Activated T-helper 2 cell treated with anti-CD3 and anti-CD28 coated beads, Interferon-gamma antibody, Interleukin-2, Interleukin-4, amounts not matched to agents 10 μg/mL and 5 μg/mL and 100 μg/mL, durations not matched to agents 14 hours and 24 hours and 36 hours (primary cell): ENCODE measurements at regions of chr6 and their contacts with region 1.

Region 1: GRCh38 chr6:25601800-25602673 is 50.0 kb upstream of the SCGN start:
- DNase-seq: no peak
- H3K4me3 Mint-ChIP-seq: no peak overlapping the region
- H3K27ac Mint-ChIP-seq: no peak overlapping the region
- H3K4me1 Mint-ChIP-seq: peaks cover 4% of the 10 kb centered on the region
- H3K27me3 Mint-ChIP-seq: no peaks in the 10 kb centered on the region

Region 2: DNA sequence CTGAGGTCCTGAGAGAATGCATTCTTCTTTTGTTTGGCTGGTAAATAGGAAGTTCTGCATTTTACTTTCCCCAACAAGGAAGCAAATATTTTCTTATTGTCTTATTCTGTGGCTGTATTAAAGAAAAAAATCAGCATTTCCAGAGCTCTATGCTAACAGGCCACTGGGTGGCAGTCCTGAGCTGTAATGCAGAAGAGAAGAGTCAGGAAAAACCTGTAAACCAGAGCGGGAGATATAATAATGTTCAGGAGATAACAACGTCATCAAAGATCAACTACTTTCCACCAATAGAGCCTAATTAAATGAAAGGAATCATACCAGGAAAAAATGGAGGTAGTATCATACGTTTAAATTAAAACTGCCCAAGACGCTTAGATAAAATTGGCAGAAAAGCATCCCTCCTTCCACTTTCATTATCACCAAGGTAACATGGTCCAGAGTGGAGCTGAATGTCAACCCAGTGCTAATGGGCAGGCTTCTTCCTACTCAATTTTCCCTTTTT is 378.5 kb before region 1 on chr6:
- intact Hi-C with region 1: loop called (anchors 2 kb)
- DNase-seq: peak; percentile 24
- H3K4me3 Mint-ChIP-seq: peak overlapping the region; percentile 57
- H3K27ac Mint-ChIP-seq: no peak overlapping the region
- H3K4me1 Mint-ChIP-seq: peaks cover 13% of the 10 kb centered on the region
- H3K27me3 Mint-ChIP-seq: peaks cover 6% of the 10 kb centered on the region

Region 3: DNA sequence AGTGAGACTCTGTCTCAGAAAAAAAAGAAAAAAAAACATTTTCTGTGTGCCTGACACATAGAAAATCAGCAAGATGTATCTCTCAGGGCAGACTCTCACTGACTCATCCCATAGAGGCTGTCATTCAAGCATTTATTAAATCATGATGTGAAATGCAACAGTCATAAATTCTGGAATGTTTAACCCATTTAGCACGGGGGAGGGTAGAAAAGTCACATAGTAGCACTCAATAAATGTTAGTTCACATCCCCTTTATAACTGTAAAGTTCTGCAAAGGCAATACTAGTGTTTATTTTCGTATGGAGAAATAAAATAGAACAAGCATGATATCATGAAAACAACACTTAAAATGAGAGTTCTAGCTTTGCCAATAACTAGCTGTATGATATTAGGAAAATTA is 338.4 kb before region 1 on chr6:
- intact Hi-C with region 1: loop called (anchors 1 kb)
- DNase-seq: no peak
- H3K4me3 Mint-ChIP-seq: no peak overlapping the region
- H3K27ac Mint-ChIP-seq: no peak overlapping the region
- H3K4me1 Mint-ChIP-seq: peaks cover 2% of the 10 kb centered on the region
- H3K27me3 Mint-ChIP-seq: peaks cover 23% of the 10 kb centered on the region

Region 4: GRCh38 chr6:25324066-25324762 is 277.8 kb before region 1 on chr6:
- intact Hi-C with region 1: no loop called
- DNase-seq: no peak
- H3K4me3 Mint-ChIP-seq: no peak overlapping the region
- H3K27ac Mint-ChIP-seq: no peak overlapping the region
- H3K4me1 Mint-ChIP-seq: no peaks in the 10 kb centered on the region
- H3K27me3 Mint-ChIP-seq: no peaks in the 10 kb centered on the region

Region 5: DNA sequence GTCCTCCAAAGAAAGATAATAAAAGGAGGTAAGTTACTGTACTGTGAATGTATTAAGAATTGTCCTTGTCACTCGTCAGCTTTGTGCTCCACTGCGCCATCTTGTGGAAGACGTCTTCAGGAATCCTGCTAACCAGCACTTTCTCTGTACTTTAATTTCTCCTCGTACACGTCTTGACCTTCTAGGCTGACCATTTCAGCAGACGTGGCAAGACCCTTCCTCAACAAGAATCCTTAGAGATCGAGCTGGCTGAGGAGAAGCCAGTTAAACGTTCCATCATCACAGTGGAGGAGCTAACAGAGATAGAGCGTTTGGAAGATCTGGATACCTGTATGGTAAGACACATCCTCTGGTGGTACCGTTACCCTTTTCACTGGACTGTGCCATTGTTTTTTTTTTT is 45.5 kb before region 1 on chr6:
- intact Hi-C with region 1: loop called (anchors 5 kb)
- DNase-seq: peak; percentile 50
- H3K4me3 Mint-ChIP-seq: no peak overlapping the region
- H3K27ac Mint-ChIP-seq: no peak overlapping the region
- H3K4me1 Mint-ChIP-seq: peaks cover 2% of the 10 kb centered on the region
- H3K27me3 Mint-ChIP-seq: peaks cover 4% of the 10 kb centered on the region

Region 6: GRCh38 chr6:25574312-25574711 is 27.7 kb before region 1 on chr6:
- intact Hi-C with region 1: no loop called
- DNase-seq: no peak
- H3K4me3 Mint-ChIP-seq: no peak overlapping the region
- H3K27ac Mint-ChIP-seq: no peak overlapping the region
- H3K4me1 Mint-ChIP-seq: no peaks in the 10 kb centered on the region
- H3K27me3 Mint-ChIP-seq: no peaks in the 10 kb centered on the region